Ovary (tissue), 10 donors: ENCODE measurements at regions of chr4 and their contacts with region 1.

Region 1: GRCh38 chr4:142126890-142127497 is 490.6 kb downstream of the IL15 start:
- DNase-seq: peak; percentile 17 to 64 (median 36)
- H3K4me3 ChIP-seq: no peak overlapping the region
- H3K27ac ChIP-seq: no peak overlapping the region
- H3K4me1 ChIP-seq: no peaks in the 10 kb centered on the region
- H3K27me3 ChIP-seq: no peaks in the 10 kb centered on the region
- CTCF ChIP-seq: peak; percentile 35 to 64 (median 55)
- EP300 ChIP-seq: no peak
- POLR2A ChIP-seq: no peak

Region 2: DNA sequence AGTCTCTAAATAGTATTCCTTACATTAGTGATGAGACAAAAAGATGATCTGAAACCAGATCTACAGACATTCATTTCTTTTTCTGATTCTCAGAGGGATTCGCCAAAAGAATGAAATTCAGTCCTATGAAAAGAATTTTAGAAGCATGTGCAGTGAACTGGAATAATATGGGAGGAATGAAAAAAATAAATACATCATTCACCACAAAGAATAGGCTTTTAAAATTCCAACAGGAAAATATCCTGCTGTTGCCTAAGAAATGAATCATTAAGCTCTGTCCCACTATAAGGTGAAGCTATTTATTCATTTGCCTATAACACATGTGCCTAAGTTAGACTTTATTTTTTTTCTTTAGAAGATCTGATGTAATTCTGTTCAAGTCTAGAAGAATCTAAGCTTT is 324.7 kb before region 1 on chr4:
- intact Hi-C with region 1: no loop called
- DNase-seq: no peak
- H3K4me3 ChIP-seq: no peak overlapping the region
- H3K27ac ChIP-seq: no peak overlapping the region
- H3K4me1 ChIP-seq: no peaks in the 10 kb centered on the region
- H3K27me3 ChIP-seq: no peaks in the 10 kb centered on the region
- CTCF ChIP-seq: no peak
- EP300 ChIP-seq: no peak
- POLR2A ChIP-seq: no peak

Region 3: GRCh38 chr4:142846729-142847596 is 720.0 kb after region 1 on chr4:
- intact Hi-C with region 1: loop called in 3 of 4 experiments (anchors 5 to 10 kb)
- DNase-seq: peak; percentile 19 to 49 (median 28)
- H3K4me3 ChIP-seq: peak overlapping the region; percentile 65
- H3K27ac ChIP-seq: peak overlapping the region in 1 of 2 donors; percentile 44
- H3K4me1 ChIP-seq: peaks cover 3% of the 10 kb centered on the region
- H3K27me3 ChIP-seq: no peaks in the 10 kb centered on the region
- CTCF ChIP-seq: no peak
- EP300 ChIP-seq: no peak
- POLR2A ChIP-seq: no peak